Tibial artery (tissue), 4 donors: ENCODE measurements at regions of chr9 and their contacts with region 1.

Region 1: DNA sequence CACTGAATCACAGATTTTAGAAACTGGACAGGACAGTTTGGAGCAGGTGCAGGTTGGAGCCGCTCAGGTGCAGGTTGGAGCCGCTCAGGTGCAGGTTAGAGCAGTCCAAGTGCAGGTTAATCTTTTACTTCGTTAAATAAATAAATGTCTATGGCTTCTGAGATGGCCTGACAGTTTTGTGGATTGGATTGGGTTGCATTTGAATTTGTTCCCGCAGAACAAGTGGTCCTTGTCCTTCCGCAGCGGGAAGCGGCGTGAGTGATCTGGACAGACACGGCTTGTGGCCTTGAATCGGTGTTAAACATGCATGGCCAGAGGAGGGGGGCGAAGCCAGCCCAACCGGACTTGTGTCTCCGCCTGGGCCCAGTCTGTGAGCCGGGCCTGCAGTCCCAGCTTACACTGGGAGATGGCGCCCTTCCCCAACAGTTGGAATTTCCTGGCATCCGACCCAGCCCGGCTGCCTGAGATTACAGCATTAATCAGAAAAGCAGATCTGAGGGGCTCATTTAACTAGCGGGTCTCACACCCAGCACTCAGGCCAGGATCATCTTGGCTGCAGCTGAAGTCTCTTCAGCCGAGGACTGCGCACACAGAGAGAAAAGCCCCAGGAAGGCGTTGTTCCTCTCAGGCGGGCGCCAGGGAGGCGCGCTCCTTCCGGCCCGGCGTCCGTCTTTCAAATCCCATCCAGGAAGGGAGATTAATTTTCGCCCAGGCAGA is 1.5 kb upstream of the OLFM1 start:
- DNase-seq: peak; percentile 78 to 83
- H3K4me3 ChIP-seq: peak overlapping the region in 1 of 2 donors; percentile 30
- H3K27ac ChIP-seq: no peak overlapping the region
- H3K4me1 ChIP-seq: peaks cover 0 to 38% (median 24%) of the 10 kb centered on the region in 4 donors
- H3K27me3 ChIP-seq: peaks cover 0 to 76% of the 10 kb centered on the region in 2 donors
- CTCF ChIP-seq: peak; percentile 92 to 94

Region 2: GRCh38 chr9:134185536-134186011 is 900.4 kb before region 1 on chr9:
- intact Hi-C with region 1: no loop called
- DNase-seq: peak in 1 of 2 donors; percentile 24
- H3K4me3 ChIP-seq: no peak overlapping the region
- H3K27ac ChIP-seq: no peak overlapping the region
- H3K4me1 ChIP-seq: peaks cover 0 to 18% (median 9%) of the 10 kb centered on the region in 4 donors
- H3K27me3 ChIP-seq: peaks cover 0 to 42% of the 10 kb centered on the region in 2 donors
- CTCF ChIP-seq: no peak

Region 3: GRCh38 chr9:135343837-135344522 is 258.0 kb after region 1 on chr9:
- intact Hi-C with region 1: loop called (anchors 2 kb)
- DNase-seq: no peak
- H3K4me3 ChIP-seq: no peak overlapping the region
- H3K27ac ChIP-seq: no peak overlapping the region
- H3K4me1 ChIP-seq: peaks cover 0 to 4% (median 0%) of the 10 kb centered on the region in 4 donors
- H3K27me3 ChIP-seq: peaks cover 0 to 98% of the 10 kb centered on the region in 2 donors
- CTCF ChIP-seq: peak; percentile 66 to 77

Region 4: DNA sequence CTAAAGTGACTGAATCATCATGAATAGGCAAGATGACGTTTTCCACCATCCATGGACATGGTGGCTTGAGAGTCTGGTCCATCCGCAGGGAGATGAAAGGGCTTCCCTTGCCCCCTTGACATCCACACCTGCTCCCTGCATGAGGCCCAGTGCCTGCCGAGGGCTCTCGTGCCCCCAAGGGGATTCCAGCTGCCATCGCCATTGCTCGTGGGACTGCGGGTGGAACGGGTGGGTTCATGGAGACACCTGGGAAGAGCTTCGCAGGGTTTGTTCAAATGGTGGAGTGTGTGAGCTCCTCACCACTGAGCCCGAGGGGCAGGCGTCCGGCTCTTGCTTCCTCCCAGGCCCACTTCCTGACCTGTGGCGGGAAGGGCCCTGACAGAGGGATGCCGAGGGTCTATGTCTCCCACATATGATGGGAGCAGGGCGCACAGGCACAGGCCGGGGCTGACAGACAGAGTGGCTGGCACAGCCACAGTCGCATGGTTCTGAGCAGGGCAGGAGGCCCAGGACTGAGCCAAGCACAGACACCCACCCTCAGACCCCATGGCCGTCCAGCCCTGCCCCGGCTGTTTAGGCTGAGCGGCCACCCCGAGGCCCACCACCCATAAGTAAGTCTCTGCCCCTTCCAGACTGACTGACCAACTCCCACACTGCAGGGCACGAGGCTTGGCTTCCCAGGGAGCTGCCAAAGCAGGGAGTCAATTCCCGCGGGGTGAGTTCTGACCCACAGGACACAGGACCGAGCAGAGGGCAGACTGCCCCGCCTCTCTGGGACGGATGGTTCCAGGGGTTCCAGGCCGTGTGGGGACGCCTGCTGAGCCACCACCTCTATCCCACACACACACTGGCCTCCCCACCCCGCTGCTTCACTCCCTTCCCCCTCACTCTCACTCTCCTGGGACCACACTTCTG is 323.6 kb after region 1 on chr9:
- intact Hi-C with region 1: loop called (anchors 2 kb)
- DNase-seq: no peak
- H3K4me3 ChIP-seq: no peak overlapping the region
- H3K27ac ChIP-seq: no peak overlapping the region
- H3K4me1 ChIP-seq: peaks cover 0 to 5% (median 0%) of the 10 kb centered on the region in 4 donors
- H3K27me3 ChIP-seq: peaks cover 0 to 56% of the 10 kb centered on the region in 2 donors
- CTCF ChIP-seq: no peak